ENCODE measurements at regions of chr14 and their contacts with region 1.

Region 1: DNA sequence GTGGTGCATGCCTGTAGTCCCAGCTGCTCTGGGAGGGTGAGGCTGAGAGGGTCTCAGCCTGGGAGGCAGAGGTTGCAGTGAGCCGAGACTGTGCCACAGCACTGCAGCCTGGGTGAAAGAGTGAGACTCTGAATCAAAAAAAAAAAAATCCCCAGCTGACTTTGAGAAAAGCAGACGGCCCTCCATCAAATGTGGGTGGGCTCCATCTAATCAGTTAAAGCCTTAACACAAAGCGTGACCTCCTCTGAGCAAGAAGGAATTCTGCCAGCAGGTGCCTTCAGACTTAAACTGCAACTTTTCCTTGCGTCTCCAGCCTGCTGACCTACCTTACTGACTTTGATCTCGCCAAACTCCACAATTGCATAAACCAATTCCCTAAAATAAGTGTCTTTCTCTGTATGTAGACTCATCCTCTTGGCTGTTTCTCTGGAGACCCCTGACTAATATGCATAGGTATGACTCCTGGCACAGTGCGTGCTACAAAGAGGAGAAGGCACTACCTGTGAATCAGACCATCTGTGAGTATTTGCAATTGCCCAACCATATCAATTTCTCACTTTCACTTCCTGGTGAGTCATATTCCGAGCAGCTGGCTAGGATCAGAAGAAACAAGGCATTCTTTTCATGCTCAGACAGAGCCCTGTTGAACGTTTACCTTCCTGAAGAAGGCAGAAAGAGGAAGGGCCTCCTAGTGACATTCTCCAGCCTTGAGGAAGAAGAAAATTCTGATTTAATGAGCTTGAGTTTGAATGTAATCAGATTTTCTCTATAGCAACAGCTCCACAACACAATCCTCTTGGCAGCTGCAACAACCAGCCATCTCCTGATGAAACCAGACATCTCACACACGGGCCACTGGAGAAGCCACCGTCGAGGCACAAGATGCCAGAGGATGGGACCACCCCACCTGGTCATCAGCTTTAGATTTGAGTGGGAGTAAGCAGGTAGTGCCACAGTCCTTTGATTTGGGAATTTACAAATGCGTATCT is 54.3 kb downstream of the CLMN start:
- DNase-seq: peak; percentile 95
- ATAC-seq: peak; percentile 98
- H3K4me3 ChIP-seq: peak overlapping the region in 1 of 3 experiments; percentile 26; a peak in 2 of 6 replicates
- H3K27ac ChIP-seq: peak overlapping the region; percentile 62
- H3K4me1 ChIP-seq: peaks cover 31% of the 10 kb centered on the region
- H3K27me3 ChIP-seq: no peaks in the 10 kb centered on the region
- CTCF ChIP-seq: no peak
- EP300 ChIP-seq: peak; percentile 74 to 90
- POLR2A ChIP-seq: no peak
- RAD21 ChIP-seq: no peak

Region 2: GRCh38 chr14:95123891-95124579 is 141.4 kb before region 1 on chr14:
- CTCF ChIA-PET with region 1: no interaction called
- POLR2A ChIA-PET with region 1: no interaction called
- in situ Hi-C with region 1: no loop called
- intact Hi-C with region 1: no loop called
- DNase-seq: no peak
- ATAC-seq: no peak
- H3K4me3 ChIP-seq: no peak overlapping the region
- H3K27ac ChIP-seq: no peak overlapping the region
- H3K4me1 ChIP-seq: peaks cover 10% of the 10 kb centered on the region
- H3K27me3 ChIP-seq: no peaks in the 10 kb centered on the region; a peak in 1 of 5 replicates
- CTCF ChIP-seq: no peak
- EP300 ChIP-seq: no peak
- POLR2A ChIP-seq: no peak
- RAD21 ChIP-seq: no peak

Region 3: GRCh38 chr14:95319312-95320021 is 54.1 kb after region 1 on chr14 and contains the start of gene CLMN:
- CTCF ChIA-PET with region 1: no interaction called
- POLR2A ChIA-PET with region 1: no interaction called
- in situ Hi-C with region 1: no loop called
- intact Hi-C with region 1: loop called (anchors 5 kb)
- DNase-seq: no peak
- ATAC-seq: peak; percentile 40
- H3K4me3 ChIP-seq: peak within 1 kb of the TSS; percentile 69 to 95 (median 86)
- H3K27ac ChIP-seq: peak within 1 kb of the TSS; percentile 10
- H3K4me1 ChIP-seq: peaks cover 69% of the 10 kb centered on the region
- H3K27me3 ChIP-seq: peaks cover 2 to 18% of the 10 kb centered on the region in 2 experiments; a peak in 2 of 5 replicates
- CTCF ChIP-seq: no peak; the same call in 1 of the 2 replicates
- EP300 ChIP-seq: no peak
- POLR2A ChIP-seq: no peak
- RAD21 ChIP-seq: peak; percentile 28; the same call in 1 of the 2 replicates
- total RNA-seq, gene CLMN: 15.1 and 16.2 TPM in 2 replicates

Region 4: DNA sequence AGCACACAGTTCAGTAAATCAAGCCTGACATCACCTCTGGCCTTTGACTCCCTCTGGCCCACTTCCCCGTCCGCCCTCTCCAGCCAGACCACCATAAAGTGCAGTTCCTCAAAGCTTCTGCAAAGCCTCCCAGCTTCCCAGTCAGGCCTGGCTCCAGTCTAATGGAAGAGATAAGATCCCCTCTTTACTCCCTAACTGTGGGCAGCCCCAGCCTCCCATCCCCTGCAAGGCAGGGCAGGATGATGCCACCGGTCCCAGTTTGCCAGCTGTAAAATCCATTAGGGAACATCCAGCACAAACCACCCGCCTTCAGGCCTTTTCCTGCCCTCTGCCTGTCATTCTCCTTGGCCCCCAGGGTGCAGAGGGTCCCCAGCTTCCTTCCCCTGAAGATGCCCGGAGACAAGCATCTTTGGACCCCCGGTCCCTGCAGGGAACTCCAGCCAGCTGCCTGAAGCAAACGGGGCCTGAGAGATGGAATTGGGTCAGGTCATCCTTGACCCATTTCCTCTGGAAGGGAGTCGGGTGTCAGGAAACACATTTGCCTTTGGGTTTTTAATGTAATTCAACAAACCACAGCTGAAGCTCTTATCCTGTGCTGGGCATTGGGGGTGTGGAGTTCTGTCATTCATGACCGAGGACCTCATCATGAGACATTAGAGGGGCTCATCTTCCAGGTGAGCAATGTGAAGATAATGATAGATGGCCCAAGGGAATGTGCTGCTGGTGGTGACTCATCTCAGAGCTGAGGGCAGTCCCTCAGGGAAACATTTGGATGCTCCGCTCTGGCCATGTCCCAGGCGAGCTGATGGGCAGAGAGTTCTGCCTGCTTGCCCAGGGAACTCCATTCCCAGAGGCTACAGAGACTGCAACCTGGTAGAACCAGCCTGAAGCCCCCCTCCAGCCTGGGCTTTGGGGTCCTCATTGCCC is 148.2 kb after region 1 on chr14:
- CTCF ChIA-PET with region 1: no interaction called
- POLR2A ChIA-PET with region 1: no interaction called
- in situ Hi-C with region 1: no loop called
- intact Hi-C with region 1: no loop called
- DNase-seq: no peak
- ATAC-seq: no peak
- H3K4me3 ChIP-seq: no peak overlapping the region
- H3K27ac ChIP-seq: no peak overlapping the region
- H3K4me1 ChIP-seq: no peaks in the 10 kb centered on the region
- H3K27me3 ChIP-seq: no peaks in the 10 kb centered on the region
- CTCF ChIP-seq: no peak
- EP300 ChIP-seq: no peak
- POLR2A ChIP-seq: no peak
- RAD21 ChIP-seq: no peak